Endothelial cell of umbilical vein (primary cell): ENCODE measurements at regions of chr11 and their contacts with region 1.

Region 1: DNA sequence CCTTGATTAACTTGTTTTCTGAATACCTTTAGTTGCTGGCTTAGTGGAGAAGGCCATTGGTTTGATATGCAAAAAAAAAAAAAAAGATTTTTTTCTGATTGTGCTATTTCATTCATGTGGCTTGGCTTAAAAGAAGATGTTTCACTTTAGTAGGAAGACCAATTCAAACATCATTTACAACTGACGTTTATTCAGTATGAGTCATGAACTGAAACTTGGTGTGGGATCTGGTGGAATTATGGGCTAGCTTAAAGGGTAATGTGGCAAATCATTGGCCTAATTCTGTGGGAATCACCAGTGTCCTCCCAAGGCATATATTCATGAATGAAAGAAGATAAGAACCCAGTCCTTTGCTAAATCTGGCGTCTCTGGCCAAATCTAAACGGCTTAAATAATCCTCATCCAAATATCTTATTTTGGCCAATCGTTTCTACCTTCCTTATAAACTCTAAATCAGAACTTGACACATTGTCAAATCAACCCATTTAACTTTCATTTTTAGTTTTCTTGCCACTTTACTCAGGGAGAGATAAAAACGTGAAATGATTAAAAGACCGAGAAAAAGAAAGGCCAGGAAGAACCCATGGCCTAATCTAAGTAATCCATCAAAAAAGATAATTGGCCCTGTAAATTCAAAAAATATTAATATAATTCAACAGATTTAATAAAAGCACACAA is 77.0 kb downstream of the DDIAS start:
- DNase-seq: no peak
- H3K4me3 ChIP-seq: no peak overlapping the region
- H3K27ac ChIP-seq: no peak overlapping the region
- H3K4me1 ChIP-seq: peaks cover 22% of the 10 kb centered on the region
- H3K27me3 ChIP-seq: no peaks in the 10 kb centered on the region
- CTCF ChIP-seq: no peak
- POLR2A ChIP-seq: no peak

Region 2: GRCh38 chr11:82831364-82831763 is 147.2 kb before region 1 on chr11:
- CTCF ChIA-PET with region 1: no interaction called
- POLR2A ChIA-PET with region 1: no interaction called
- dilution Hi-C with region 1: no loop called
- intact Hi-C with region 1: no loop called
- DNase-seq: no peak
- H3K4me3 ChIP-seq: no peak overlapping the region
- H3K27ac ChIP-seq: no peak overlapping the region
- H3K4me1 ChIP-seq: no peaks in the 10 kb centered on the region
- H3K27me3 ChIP-seq: no peaks in the 10 kb centered on the region
- CTCF ChIP-seq: no peak
- POLR2A ChIP-seq: no peak

Region 3: DNA sequence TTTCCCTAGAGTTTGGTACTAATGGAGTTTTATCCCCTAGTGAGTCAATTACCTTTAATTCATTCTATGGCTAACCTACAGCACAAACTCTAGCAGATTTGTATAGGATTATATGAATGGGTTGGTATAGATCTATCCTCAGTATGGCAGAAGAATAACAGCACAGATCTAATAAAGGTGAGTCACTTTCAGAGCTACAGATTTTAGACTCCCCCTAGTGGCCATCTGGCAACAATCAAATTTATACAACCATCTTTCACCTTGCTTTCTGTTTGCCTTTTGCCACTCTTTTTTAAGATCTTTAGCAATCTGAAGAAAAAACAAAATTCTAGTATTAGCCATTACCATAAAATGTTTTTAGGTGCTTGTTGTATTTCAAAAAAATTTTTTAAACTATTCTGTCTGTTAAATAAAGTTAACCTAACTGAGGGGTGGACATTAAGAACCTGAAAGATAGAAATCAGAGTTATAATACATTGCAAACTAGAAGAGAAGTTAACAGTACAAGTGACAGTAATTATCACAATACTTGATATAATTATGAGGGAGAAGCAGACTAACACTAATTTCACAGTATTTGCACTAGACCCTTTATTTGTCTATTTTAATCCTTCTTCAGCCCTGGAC is 51.2 kb before region 1 on chr11:
- CTCF ChIA-PET with region 1: interaction called, 5 read pairs
- POLR2A ChIA-PET with region 1: no interaction called
- dilution Hi-C with region 1: no loop called
- intact Hi-C with region 1: loop called (anchors 5 kb)
- DNase-seq: peak; percentile 59
- H3K4me3 ChIP-seq: no peak overlapping the region
- H3K27ac ChIP-seq: no peak overlapping the region
- H3K4me1 ChIP-seq: peaks cover 16% of the 10 kb centered on the region
- H3K27me3 ChIP-seq: no peaks in the 10 kb centered on the region
- CTCF ChIP-seq: peak; percentile 59 to 61
- POLR2A ChIP-seq: no peak

Region 4: DNA sequence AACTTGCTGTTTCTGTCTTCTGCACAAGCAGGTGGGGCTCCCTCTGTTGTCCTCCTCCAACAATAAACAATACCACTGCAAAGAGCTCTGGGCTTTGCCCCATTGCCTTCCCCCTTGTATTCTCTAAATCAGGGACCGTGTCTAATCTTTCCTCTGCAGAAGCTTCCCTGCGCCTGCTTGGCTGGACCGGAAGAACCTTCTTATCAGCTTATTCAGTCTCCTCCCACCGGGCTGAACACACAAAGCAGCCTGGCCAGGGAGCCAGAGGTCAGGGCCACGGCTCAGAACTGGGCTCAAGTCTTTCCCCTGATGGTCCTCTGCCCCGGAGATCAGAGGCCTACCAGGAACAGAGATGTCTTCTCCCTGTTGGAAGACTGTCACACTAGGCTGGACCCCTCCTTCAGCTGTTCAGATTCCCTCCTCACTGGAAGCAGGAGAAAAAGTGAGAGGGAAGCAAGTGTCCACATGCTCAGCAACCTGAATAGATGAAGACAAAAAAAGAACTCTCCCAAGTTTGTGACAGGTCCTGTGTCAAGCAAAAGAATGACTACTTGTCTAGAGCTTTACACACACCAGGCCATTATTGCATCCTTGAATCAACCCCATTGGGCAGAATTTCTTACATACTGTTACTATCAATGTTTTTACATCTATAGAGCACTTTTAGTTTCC is 29.5 kb after region 1 on chr11:
- CTCF ChIA-PET with region 1: interaction called, 8 read pairs
- POLR2A ChIA-PET with region 1: no interaction called
- dilution Hi-C with region 1: no loop called
- intact Hi-C with region 1: loop called (anchors 1 kb)
- DNase-seq: peak; percentile 94
- H3K4me3 ChIP-seq: no peak overlapping the region
- H3K27ac ChIP-seq: peak overlapping the region; percentile 68
- H3K4me1 ChIP-seq: peaks cover 40% of the 10 kb centered on the region
- H3K27me3 ChIP-seq: no peaks in the 10 kb centered on the region
- CTCF ChIP-seq: peak in 1 of 2 donors; percentile 6
- POLR2A ChIP-seq: peak; percentile 51